T-cell (primary cell): ENCODE measurements at regions of chr14 and their contacts with region 1.

Region 1: DNA sequence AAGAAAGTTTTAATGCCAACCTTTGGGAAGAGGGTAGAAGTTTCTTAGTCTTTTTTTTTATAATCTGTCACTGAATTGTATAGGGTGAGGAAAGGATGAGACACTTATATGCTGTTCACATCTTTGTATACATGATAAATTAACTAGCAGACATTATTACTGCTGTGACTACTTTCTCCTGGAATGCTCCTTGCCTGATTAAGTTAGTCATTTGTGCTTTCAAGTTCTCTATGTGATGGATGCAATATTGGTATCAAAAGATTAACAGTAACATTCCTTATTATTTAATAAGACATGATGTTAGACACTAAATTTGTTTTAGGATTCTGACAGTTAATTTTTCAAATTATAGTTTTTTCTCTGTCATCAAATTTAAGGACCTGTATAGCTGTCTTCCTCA is 223.4 kb upstream of the GARIN2 start:
- DNase-seq: no peak
- ATAC-seq: no peak
- H3K4me3 ChIP-seq: no peak overlapping the region
- H3K4me3 Mint-ChIP-seq: no peak overlapping the region
- H3K27ac ChIP-seq: no peak overlapping the region
- H3K27ac Mint-ChIP-seq: no peak overlapping the region
- H3K4me1 ChIP-seq: no peaks in the 10 kb centered on the region
- H3K4me1 Mint-ChIP-seq: no peaks in the 10 kb centered on the region
- H3K27me3 ChIP-seq: no peaks in the 10 kb centered on the region
- H3K27me3 Mint-ChIP-seq: no peaks in the 10 kb centered on the region

Region 2: DNA sequence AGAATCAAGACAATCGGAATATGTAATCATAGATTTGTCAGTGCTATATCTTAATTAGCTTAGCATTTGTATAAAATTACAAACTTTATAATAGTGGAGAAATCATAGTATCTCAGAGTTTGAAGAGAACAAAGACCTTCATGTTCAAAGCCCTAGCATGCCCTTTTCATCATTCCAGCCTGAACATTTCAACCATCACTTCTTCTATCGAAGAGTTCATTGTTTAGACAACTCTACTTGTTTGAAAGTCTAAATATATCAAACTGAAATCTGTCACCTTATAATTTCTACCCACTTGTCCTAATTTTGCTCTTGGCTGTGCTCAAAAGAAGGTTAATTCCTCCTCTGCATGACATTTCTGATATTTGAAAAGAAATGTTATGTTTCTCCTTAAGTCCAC is 132.0 kb before region 1 on chr14:
- CTCF ChIA-PET with region 1: no interaction called
- POLR2A ChIA-PET with region 1: no interaction called
- DNase-seq: no peak
- ATAC-seq: no peak
- H3K4me3 ChIP-seq: no peak overlapping the region
- H3K4me3 Mint-ChIP-seq: no peak overlapping the region
- H3K27ac ChIP-seq: no peak overlapping the region
- H3K27ac Mint-ChIP-seq: no peak overlapping the region
- H3K4me1 ChIP-seq: no peaks in the 10 kb centered on the region
- H3K4me1 Mint-ChIP-seq: no peaks in the 10 kb centered on the region
- H3K27me3 ChIP-seq: no peaks in the 10 kb centered on the region
- H3K27me3 Mint-ChIP-seq: no peaks in the 10 kb centered on the region

Region 3: GRCh38 chr14:66920196-66920595 is 45.6 kb before region 1 on chr14:
- CTCF ChIA-PET with region 1: no interaction called
- POLR2A ChIA-PET with region 1: no interaction called
- DNase-seq: no peak
- ATAC-seq: no peak
- H3K4me3 ChIP-seq: no peak overlapping the region
- H3K4me3 Mint-ChIP-seq: no peak overlapping the region
- H3K27ac ChIP-seq: no peak overlapping the region
- H3K27ac Mint-ChIP-seq: no peak overlapping the region
- H3K4me1 ChIP-seq: no peaks in the 10 kb centered on the region
- H3K4me1 Mint-ChIP-seq: no peaks in the 10 kb centered on the region
- H3K27me3 ChIP-seq: no peaks in the 10 kb centered on the region
- H3K27me3 Mint-ChIP-seq: no peaks in the 10 kb centered on the region

Region 4: DNA sequence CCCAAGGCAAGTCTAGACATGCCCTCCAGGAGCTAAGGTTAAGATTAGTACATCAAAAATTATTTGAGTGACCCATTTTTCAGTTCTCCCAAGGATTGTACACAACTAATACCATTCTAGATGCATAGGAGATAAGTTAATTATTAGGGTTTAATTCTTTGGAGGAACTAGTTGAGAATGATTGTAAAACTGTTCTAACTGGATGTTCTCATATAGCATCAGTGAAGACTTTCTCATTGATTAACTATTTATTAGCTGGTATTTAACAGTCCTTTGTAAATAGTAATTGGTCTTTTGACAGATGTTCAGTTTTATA is 33.1 kb before region 1 on chr14:
- CTCF ChIA-PET with region 1: no interaction called
- POLR2A ChIA-PET with region 1: interaction called in 1 of 2 experiments, 12 read pairs
- DNase-seq: no peak
- ATAC-seq: no peak
- H3K4me3 ChIP-seq: no peak overlapping the region
- H3K4me3 Mint-ChIP-seq: no peak overlapping the region
- H3K27ac ChIP-seq: no peak overlapping the region
- H3K27ac Mint-ChIP-seq: no peak overlapping the region
- H3K4me1 ChIP-seq: no peaks in the 10 kb centered on the region
- H3K4me1 Mint-ChIP-seq: no peaks in the 10 kb centered on the region
- H3K27me3 ChIP-seq: no peaks in the 10 kb centered on the region
- H3K27me3 Mint-ChIP-seq: no peaks in the 10 kb centered on the region